Left ventricle myocardium inferior (tissue), 1 donor: ENCODE measurements at regions of chr10 and their contacts with region 1.

Region 1: GRCh38 chr10:10514797-10515196 is 502.9 kb upstream of the CELF2 start:
- DNase-seq: no peak
- H3K4me3 ChIP-seq: no peak overlapping the region
- H3K27ac ChIP-seq: no peak overlapping the region
- H3K4me1 ChIP-seq: peaks cover 4% of the 10 kb centered on the region
- H3K27me3 ChIP-seq: no peaks in the 10 kb centered on the region
- CTCF ChIP-seq: no peak

Region 2: DNA sequence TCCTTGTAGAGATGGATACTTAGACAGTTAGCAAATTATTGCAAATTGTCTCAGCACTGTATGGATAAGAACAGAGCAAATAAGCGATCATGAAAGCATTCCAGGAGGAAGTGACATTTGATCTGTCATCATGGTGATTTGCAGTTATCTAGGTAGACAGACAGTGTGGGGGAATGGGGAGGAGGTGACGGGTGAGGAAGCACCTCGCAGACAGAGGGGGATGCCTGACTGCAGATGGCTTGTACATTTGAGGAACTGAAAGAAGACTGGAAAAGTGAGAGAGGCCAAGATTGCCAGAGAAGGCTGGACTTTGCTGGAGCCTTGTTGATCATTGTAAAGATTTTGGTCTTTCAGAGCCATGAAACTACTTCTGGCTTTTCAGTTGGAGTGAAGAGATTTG is 184.6 kb after region 1 on chr10:
- intact Hi-C with region 1: no loop called
- DNase-seq: no peak
- H3K4me3 ChIP-seq: no peak overlapping the region
- H3K27ac ChIP-seq: no peak overlapping the region
- H3K4me1 ChIP-seq: no peaks in the 10 kb centered on the region
- H3K27me3 ChIP-seq: no peaks in the 10 kb centered on the region
- CTCF ChIP-seq: no peak

Region 3: GRCh38 chr10:10946801-10947200 is 432.0 kb after region 1 on chr10:
- intact Hi-C with region 1: loop called (anchors 5 kb)
- DNase-seq: no peak
- H3K4me3 ChIP-seq: no peak overlapping the region
- H3K27ac ChIP-seq: no peak overlapping the region
- H3K4me1 ChIP-seq: no peaks in the 10 kb centered on the region
- H3K27me3 ChIP-seq: no peaks in the 10 kb centered on the region
- CTCF ChIP-seq: no peak